ENCODE measurements at regions of chr12 and their contacts with region 1.

Region 1: DNA sequence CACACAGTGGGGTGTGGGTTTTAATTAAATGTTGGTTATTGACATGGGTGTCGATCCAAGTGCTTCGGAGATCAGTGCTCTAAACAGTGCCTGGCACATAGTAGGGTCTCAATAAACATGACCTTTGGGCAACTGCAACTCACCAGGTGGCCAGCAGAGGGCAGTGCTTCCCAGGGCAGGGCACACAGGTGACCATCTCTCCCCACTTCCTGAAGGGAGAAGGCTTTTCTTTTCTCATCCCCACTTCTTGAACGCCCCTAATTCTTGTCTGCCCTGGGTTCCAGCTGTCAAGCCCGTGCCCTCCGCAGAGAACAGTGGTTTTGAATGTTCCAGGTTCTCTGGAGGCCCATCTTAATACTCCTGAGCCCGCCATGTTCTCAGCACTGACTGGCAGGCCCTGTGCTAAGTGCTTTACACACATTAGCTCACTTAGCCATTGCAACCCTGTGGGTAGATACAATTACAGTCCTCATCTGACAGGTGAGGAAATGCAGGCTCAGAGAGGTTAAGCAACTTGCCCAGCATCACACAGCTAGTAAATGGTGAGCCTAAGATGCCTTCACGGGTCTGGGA is 16.3 kb downstream of the RAPGEF3 start:
- DNase-seq: no peak
- H3K4me3 ChIP-seq: no peak overlapping the region
- CTCF ChIP-seq: peak; percentile 97

Region 2: GRCh38 chr12:47705566-47706425 is 36.5 kb before region 1 on chr12 and contains the start of gene RPAP3:
- CTCF ChIA-PET with region 1: interaction called, 247 read pairs
- POLR2A ChIA-PET with region 1: no interaction called
- DNase-seq: no peak
- H3K4me3 ChIP-seq: peak within 1 kb of the TSS; percentile 86
- CTCF ChIP-seq: peak; percentile 81

Region 3: DNA sequence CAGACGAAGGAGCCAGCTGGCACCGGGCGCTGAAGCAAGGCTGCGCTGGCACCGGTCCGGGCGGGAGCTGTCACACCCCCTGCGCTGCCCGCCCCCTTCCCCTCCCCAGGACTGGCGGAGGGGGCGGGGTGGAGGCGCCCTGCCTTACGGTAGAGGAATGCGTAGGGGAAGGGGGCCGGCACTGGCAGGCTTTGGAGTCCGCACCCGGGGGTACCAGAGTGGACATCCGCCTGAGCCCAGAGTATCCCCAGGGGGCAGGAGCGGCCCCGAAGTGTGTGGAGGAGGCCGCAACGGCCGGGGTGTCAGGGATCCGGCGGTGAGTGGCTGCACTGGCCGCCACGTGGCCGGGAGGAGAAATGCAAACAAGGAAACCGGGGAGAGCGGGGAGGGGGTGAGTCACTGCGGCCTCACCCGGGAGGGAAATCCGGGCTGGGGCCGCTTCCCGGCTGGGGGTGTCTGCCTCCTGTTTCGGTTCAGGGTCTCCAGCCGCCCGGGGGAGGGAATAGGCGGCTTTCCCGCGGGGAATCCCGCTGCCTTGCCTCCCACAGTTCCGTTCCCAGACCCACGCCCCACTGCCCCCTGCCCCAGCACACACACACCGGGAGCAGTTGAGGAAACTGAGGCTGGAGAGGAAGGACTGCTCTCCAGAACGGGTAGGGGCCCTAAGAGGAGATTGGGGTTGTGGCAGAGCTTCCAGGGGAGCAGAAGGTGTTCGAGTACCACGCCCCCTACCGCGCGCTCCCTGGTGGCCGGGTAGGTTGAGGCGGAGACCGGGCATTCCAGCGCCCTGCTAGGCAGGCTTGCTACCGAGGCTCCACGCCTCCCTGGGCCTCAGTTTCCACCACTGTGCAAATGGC is 16.7 kb after region 1 on chr12 and contains the start of gene RAPGEF3:
- CTCF ChIA-PET with region 1: interaction called, 349 read pairs
- POLR2A ChIA-PET with region 1: interaction called, 3 read pairs
- DNase-seq: no peak
- H3K4me3 ChIP-seq: peak within 1 kb of the TSS; percentile 68
- CTCF ChIP-seq: peak; percentile 71

Region 4: GRCh38 chr12:47793015-47793681 is 50.8 kb after region 1 on chr12:
- CTCF ChIA-PET with region 1: interaction called, 34 read pairs
- POLR2A ChIA-PET with region 1: no interaction called
- DNase-seq: no peak
- H3K4me3 ChIP-seq: no peak overlapping the region
- CTCF ChIP-seq: no peak

Region 5: GRCh38 chr12:47812797-47813510 is 70.6 kb after region 1 on chr12:
- CTCF ChIA-PET with region 1: interaction called, 17 read pairs
- POLR2A ChIA-PET with region 1: no interaction called
- DNase-seq: peak; percentile 53
- H3K4me3 ChIP-seq: peak overlapping the region; percentile 48
- CTCF ChIP-seq: no peak

Measured in AG04449 (cell line).